Dorsolateral prefrontal cortex (tissue), 120 donors: ENCODE measurements at regions of chr4 and their contacts with region 1.

Region 1: GRCh38 chr4:13783800-13784411 is 156.4 kb upstream of the BOD1L1 start:
- DNase-seq: peak in 9 of 10 donors; percentile 48 to 92 (median 78)
- H3K4me3 ChIP-seq: peak overlapping the region in 19 of 59 donors; percentile 6 to 34 (median 19)
- H3K27ac ChIP-seq: peak overlapping the region in 58 of 59 donors; percentile 57 to 98 (median 90)
- H3K27me3 ChIP-seq: no peaks in the 10 kb centered on the region
- CTCF ChIP-seq: peak in 5 of 56 donors; percentile 12 to 30 (median 19)

Region 2: GRCh38 chr4:13470379-13470778 is 313.5 kb before region 1 on chr4:
- intact Hi-C with region 1: no loop called
- DNase-seq: no peak
- H3K4me3 ChIP-seq: no peak overlapping the region
- H3K27ac ChIP-seq: no peak overlapping the region
- H3K27me3 ChIP-seq: no peaks in the 10 kb centered on the region
- CTCF ChIP-seq: no peak

Region 3: DNA sequence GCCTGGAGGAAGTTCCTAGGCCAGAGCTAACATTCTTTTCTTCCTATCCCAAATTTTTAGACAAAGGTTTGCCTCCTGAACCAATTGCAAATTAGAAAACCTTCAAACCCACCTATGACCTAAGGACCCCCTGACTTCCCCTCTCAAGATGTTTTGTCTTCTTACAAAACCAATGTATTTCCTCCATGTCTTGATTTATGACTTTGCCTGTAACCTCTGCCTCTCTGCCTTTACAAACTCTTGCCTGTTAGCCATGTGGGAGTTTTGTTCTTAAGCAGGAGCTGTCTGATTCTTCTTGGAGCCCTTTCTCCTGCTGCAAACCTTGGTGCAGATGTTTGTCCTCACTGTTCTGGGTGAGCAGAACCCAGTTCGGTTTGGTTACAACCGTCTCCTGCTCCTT is 65.9 kb after region 1 on chr4:
- intact Hi-C with region 1: loop called in 1 of 2 experiments (anchors 5 kb)
- DNase-seq: no peak
- H3K4me3 ChIP-seq: no peak overlapping the region
- H3K27ac ChIP-seq: peak overlapping the region in 4 of 59 donors; percentile 5 to 54 (median 40)
- H3K27me3 ChIP-seq: no peaks in the 10 kb centered on the region
- CTCF ChIP-seq: no peak